ENCODE measurements at regions of chr1 and their contacts with region 1.

Region 1: DNA sequence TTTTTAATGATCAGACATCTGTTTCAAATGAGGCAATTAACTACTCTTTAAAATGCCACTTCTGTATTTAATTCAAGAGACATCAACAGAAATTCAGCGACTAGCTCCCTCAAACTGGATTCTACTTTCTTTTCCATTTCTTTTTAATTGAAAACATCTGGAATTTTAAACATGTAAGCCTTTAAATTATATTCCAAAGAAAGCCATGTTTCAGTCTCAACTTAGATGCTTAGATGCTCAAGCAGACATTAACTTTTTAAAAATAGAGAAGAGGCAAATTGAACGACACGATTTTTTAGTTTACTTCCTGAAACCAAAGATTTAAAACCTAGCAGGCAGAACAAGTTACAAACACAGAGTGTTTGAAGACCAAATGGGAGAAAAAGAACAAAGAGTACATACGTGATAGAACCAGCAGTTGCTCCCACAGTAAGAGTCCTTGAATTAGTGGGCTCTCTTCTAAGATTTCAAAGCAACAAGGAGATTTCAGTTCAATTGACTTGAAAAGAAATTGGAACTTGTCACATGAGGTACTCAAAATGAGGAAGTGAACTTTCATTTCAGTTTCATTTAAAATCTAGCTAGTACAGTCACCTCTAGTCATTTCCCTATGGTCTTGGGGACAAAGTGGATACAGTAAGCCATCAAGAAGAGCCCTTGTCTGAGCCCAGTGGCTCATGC is at the start of gene CTSS:
- DNase-seq: peak; percentile 8
- H3K4me3 ChIP-seq: peak within 1 kb of the TSS; percentile 4; the same call in 1 of the 2 replicates
- H3K27me3 ChIP-seq: no peaks in the 10 kb centered on the region
- CTCF ChIP-seq: no peak
- polyA plus RNA-seq, gene CTSS: 1.1 and 1.5 TPM in 2 replicates

Region 2: DNA sequence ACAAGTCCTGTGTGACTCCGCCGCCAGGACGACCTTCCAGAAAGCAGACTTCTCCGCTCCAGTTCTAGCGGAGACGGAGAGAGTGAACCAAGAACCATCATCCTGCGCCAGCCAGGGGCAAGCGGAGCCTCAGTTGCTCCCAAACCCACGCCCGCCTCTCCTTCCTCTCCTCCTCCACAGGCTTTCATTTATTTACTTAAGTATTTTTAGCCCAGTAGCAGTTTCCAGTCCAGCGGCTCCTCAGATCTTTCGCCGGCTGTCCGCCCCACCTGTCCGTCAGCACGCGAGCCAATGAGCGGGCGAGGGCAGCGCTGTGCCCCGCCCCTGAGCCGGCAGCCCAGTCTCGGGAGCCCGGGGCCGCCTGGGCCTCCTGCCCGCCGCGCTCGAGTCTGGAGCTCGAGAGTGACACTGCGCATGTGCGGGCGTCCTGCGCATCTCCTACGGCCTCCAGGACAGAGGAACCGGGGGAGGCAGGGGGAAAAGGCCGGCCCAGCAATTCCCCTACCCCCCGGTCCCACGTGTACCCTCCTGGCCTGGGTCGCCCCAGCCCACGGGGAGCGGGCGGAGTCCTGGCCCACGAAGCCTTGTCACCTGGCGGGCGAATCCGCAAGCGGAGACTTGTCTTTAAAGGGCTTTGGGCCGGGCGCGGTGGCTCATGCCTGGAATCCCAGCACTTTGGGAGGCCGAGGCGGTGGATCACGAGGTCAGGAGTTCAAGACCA is 249.9 kb before region 1 on chr1 and contains the start of gene FALEC:
- CTCF ChIA-PET with region 1: no interaction called
- POLR2A ChIA-PET with region 1: interaction called, 14 read pairs
- DNase-seq: peak; percentile 77
- H3K4me3 ChIP-seq: peak within 1 kb of the TSS; percentile 61
- H3K27me3 ChIP-seq: no peaks in the 10 kb centered on the region
- CTCF ChIP-seq: 0 out of 2 replicates have a peak, but pooled peaks have one; percentile 3
- polyA plus RNA-seq, gene FALEC: 0.17 TPM in 1 of 2 replicates, not detected in the other

Region 3: GRCh38 chr1:150748878-150749719 is 16.3 kb before region 1 on chr1:
- CTCF ChIA-PET with region 1: interaction called, 3 read pairs
- POLR2A ChIA-PET with region 1: interaction called, 10 read pairs
- DNase-seq: no peak
- H3K4me3 ChIP-seq: no peak overlapping the region
- H3K27me3 ChIP-seq: no peaks in the 10 kb centered on the region
- CTCF ChIP-seq: no peak

Region 4: GRCh38 chr1:150808121-150808520 is 42.7 kb after region 1 on chr1 and contains the start of gene CTSK:
- CTCF ChIA-PET with region 1: no interaction called
- POLR2A ChIA-PET with region 1: no interaction called
- DNase-seq: no peak
- H3K4me3 ChIP-seq: peak within 1 kb of the TSS; percentile 30
- H3K27me3 ChIP-seq: no peaks in the 10 kb centered on the region
- CTCF ChIP-seq: no peak
- polyA plus RNA-seq, gene CTSK: 70.7 and 91.1 TPM in 2 replicates